ENCODE measurements at regions of chr11 and their contacts with region 1.

Region 1: GRCh38 chr11:88402192-88402715 is 64.7 kb upstream of the CTSC start:
- DNase-seq: peak in 1 of 2 experiments; percentile 98
- H3K4me3 ChIP-seq: no peak overlapping the region
- H3K27ac ChIP-seq: peak overlapping the region; percentile 85
- H3K4me1 ChIP-seq: peaks cover 55% of the 10 kb centered on the region
- H3K27me3 ChIP-seq: no peaks in the 10 kb centered on the region
- CTCF ChIP-seq: no peak

Region 2: GRCh38 chr11:88414385-88414861 is 12.2 kb after region 1 on chr11:
- CTCF ChIA-PET with region 1: no interaction called
- POLR2A ChIA-PET with region 1: no interaction called
- intact Hi-C with region 1: no loop called
- DNase-seq: peak; percentile 18 to 45
- H3K4me3 ChIP-seq: no peak overlapping the region
- H3K27ac ChIP-seq: peak overlapping the region; percentile 63
- H3K4me1 ChIP-seq: peaks cover 69% of the 10 kb centered on the region
- H3K27me3 ChIP-seq: no peaks in the 10 kb centered on the region
- CTCF ChIP-seq: no peak

Region 3: GRCh38 chr11:88484873-88485621 is 82.8 kb after region 1 on chr11:
- CTCF ChIA-PET with region 1: no interaction called
- POLR2A ChIA-PET with region 1: no interaction called
- intact Hi-C with region 1: loop called (anchors 5 kb)
- DNase-seq: peak; percentile 49 to 63
- H3K4me3 ChIP-seq: no peak overlapping the region
- H3K27ac ChIP-seq: no peak overlapping the region
- H3K4me1 ChIP-seq: no peaks in the 10 kb centered on the region
- H3K27me3 ChIP-seq: no peaks in the 10 kb centered on the region
- CTCF ChIP-seq: peak; percentile 90